ENCODE measurements at regions of chr12 and their contacts with region 1.

Region 1: DNA sequence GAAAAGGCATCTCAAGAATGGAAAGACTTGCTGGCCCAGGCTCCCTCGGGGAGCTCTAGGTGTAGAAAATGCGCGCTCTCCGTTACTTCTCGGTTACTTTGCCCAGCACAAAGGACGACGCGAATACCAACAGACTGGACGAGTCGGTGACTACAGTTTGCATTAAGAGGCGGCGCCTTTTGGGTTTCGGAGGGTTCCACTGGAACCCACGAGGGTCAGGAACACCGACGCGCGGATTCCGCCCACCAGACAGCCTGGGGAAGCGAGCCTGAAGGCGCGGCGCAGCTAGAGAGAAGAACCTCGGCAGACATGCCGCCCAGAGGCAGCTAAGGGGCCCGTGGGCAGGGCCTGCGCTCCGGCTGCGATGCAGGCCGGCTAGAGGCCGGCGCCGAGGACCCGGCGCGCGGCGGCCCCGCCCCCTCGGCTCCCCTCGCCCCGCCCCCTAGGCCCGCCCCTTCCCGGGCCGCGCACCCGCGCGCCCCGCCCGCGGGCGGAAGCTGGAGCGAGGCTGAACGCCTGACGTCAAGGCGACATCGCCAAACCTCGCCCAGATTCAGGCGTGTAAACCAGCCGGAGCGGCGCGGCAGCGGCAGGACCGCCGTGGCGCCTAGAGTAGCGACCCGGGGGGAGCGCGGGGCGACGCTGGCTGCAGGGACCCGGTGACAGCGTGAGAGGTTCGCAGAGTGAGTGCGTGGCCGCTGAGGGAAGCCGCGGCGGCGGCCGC is at the start of gene RAP1B:
- DNase-seq: peak; percentile 86 to 92 (median 89)
- ATAC-seq: peak; percentile 92
- H3K4me3 ChIP-seq: peak within 1 kb of the TSS; percentile 89
- H3K4me3 Mint-ChIP-seq: peak within 1 kb of the TSS; percentile 93 to 99 (median 98)
- H3K27ac ChIP-seq: peak within 1 kb of the TSS; percentile 97
- H3K27ac Mint-ChIP-seq: peak within 1 kb of the TSS; percentile 95 to 99 (median 98)
- H3K4me1 ChIP-seq: peaks cover 15 to 18% of the 10 kb centered on the region in 2 donors
- H3K4me1 Mint-ChIP-seq: peaks cover 36 to 46% (median 41%) of the 10 kb centered on the region in 7 donors
- H3K27me3 ChIP-seq: no peaks in the 10 kb centered on the region
- H3K27me3 Mint-ChIP-seq: no peaks in the 10 kb centered on the region
- total RNA-seq, gene RAP1B: 202 to 287 (median 223) TPM

Region 2: DNA sequence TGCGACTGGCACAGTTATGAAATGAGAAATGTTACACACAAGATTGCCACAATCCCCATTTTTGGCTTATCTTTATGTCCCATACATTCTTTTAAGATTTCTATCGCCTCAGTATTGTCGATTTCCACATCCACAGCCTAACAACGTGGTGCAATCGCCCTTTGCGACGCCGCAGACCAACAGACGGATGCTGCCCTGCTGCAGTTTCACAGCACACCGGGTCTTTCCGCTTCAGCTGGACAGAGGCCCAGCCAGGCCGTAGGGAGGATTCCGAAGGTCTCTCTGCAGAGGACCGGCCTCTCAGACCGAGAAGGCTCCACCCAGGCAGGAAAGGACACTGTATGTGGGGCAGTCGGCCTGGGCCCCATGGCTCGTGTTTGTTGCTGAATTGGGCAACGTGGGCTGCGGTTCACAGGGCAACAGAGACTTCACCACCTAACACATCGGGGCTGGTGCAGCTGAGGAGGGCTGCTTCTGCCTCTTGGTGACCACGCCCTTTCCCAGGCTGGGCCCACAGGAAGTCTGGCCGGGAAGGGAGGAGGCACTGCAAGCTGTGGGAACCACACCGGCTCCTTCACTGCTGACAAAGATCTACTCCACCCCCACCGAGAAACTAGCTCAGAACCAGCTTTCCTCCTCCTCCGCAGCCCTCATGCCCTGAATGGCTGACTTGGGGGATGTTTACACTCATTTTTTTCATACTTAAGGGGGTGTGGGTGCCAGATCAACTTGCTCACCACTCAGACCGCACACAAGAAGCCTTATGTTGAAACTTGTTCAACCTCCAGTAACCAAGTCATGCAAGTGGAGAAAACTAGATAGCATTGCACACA is 245.4 kb before region 1 on chr12:
- CTCF ChIA-PET with region 1: interaction called, 4 read pairs
- POLR2A ChIA-PET with region 1: interaction called, 12 read pairs
- intact Hi-C with region 1: loop called in 1 of 2 experiments (anchors 1 kb)
- DNase-seq: peak; percentile 52 to 85 (median 77)
- ATAC-seq: peak; percentile 86
- H3K4me3 ChIP-seq: peak overlapping the region; percentile 57
- H3K4me3 Mint-ChIP-seq: peak overlapping the region; percentile 77 to 93 (median 87)
- H3K27ac ChIP-seq: peak overlapping the region; percentile 80
- H3K27ac Mint-ChIP-seq: peak overlapping the region; percentile 86 to 97 (median 93)
- H3K4me1 ChIP-seq: peaks cover 40 to 50% of the 10 kb centered on the region in 2 donors
- H3K4me1 Mint-ChIP-seq: peaks cover 56 to 84% (median 69%) of the 10 kb centered on the region in 7 donors
- H3K27me3 ChIP-seq: no peaks in the 10 kb centered on the region
- H3K27me3 Mint-ChIP-seq: no peaks in the 10 kb centered on the region

Region 3: GRCh38 chr12:68497702-68498101 is 112.8 kb before region 1 on chr12:
- CTCF ChIA-PET with region 1: no interaction called
- POLR2A ChIA-PET with region 1: interaction called, 4 read pairs
- intact Hi-C with region 1: loop called in 1 of 2 experiments (anchors 1 kb)
- DNase-seq: no peak
- ATAC-seq: peak; percentile 26
- H3K4me3 ChIP-seq: no peak overlapping the region
- H3K4me3 Mint-ChIP-seq: peak overlapping the region in 1 of 10 donors; percentile 50
- H3K27ac ChIP-seq: no peak overlapping the region
- H3K27ac Mint-ChIP-seq: peak overlapping the region in 1 of 9 donors; percentile 73
- H3K4me1 ChIP-seq: peaks cover 0 to 7% of the 10 kb centered on the region in 2 donors
- H3K4me1 Mint-ChIP-seq: peaks cover 0 to 29% (median 18%) of the 10 kb centered on the region in 7 donors
- H3K27me3 ChIP-seq: no peaks in the 10 kb centered on the region
- H3K27me3 Mint-ChIP-seq: no peaks in the 10 kb centered on the region

Region 4: GRCh38 chr12:68587448-68587873 is 23.1 kb before region 1 on chr12:
- CTCF ChIA-PET with region 1: interaction called, 4 read pairs
- POLR2A ChIA-PET with region 1: interaction called, 167 read pairs
- intact Hi-C with region 1: loop called (anchors 1 kb)
- DNase-seq: peak in 8 of 9 donors; percentile 39 to 66 (median 53)
- ATAC-seq: peak; percentile 72
- H3K4me3 ChIP-seq: no peak overlapping the region
- H3K4me3 Mint-ChIP-seq: peak overlapping the region; percentile 10 to 70 (median 64)
- H3K27ac ChIP-seq: no peak overlapping the region
- H3K27ac Mint-ChIP-seq: peak overlapping the region; percentile 78 to 96 (median 88)
- H3K4me1 ChIP-seq: peaks cover 26 to 37% of the 10 kb centered on the region in 2 donors
- H3K4me1 Mint-ChIP-seq: peaks cover 33 to 82% (median 60%) of the 10 kb centered on the region in 7 donors
- H3K27me3 ChIP-seq: no peaks in the 10 kb centered on the region
- H3K27me3 Mint-ChIP-seq: no peaks in the 10 kb centered on the region

Region 5: GRCh38 chr12:68633614-68634529 is 23.3 kb after region 1 on chr12:
- CTCF ChIA-PET with region 1: no interaction called
- POLR2A ChIA-PET with region 1: interaction called, 10 read pairs
- intact Hi-C with region 1: loop called (anchors 2 kb)
- DNase-seq: no peak
- ATAC-seq: no peak
- H3K4me3 ChIP-seq: no peak overlapping the region
- H3K4me3 Mint-ChIP-seq: peak overlapping the region in 9 of 10 donors; percentile 26 to 80 (median 53)
- H3K27ac ChIP-seq: peak overlapping the region; percentile 43
- H3K27ac Mint-ChIP-seq: peak overlapping the region in 8 of 9 donors; percentile 10 to 94 (median 72)
- H3K4me1 ChIP-seq: peaks cover 67 to 77% of the 10 kb centered on the region in 2 donors
- H3K4me1 Mint-ChIP-seq: peaks cover 55 to 96% (median 87%) of the 10 kb centered on the region in 7 donors
- H3K27me3 ChIP-seq: no peaks in the 10 kb centered on the region
- H3K27me3 Mint-ChIP-seq: no peaks in the 10 kb centered on the region

Region 6: DNA sequence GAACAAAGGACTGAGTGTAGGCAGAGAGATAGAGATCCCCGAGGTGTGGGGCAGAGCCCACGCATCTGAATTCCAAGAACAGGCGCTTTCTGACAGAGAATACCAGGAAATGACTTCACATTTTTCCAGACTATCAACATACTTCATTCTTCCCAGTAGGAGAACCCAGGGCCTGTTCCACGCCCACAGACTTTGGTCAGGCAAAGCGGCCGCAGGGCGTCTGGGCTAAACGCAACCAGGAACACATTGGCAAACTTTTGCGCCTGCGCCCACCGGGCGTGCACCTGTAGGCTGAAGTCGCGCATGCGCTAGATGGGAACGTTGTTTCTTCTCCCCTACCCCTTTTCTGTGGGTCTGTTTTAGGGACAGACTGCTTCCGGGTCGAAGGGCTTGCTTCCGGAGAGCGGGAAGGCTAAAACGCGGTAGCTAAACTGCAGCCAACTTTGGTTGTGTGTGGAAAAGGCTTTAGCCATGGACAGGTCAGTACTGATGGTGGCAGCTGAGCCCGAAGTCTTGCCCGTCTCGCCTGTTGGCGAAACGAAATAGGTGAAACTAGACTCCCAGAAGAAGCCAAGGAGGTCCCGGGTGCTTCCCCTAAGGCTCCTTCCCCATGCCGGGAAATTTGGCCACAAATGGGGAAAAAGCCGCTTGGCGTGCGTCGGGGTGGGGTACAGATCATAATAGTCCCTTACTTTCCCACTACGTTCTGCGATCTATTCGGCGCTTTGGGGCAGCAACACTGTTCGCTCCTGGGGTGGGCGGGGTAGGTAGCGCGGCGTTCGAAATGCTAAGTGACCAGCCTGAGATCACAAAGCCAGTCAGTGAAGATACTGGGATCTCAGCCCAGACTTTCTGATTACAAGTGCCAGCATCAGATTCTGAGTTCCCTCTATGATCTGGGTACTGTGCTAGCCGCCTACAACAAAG is 76.3 kb after region 1 on chr12 and contains the start of gene NUP107:
- CTCF ChIA-PET with region 1: interaction called, 4 read pairs
- POLR2A ChIA-PET with region 1: interaction called, 14 read pairs
- intact Hi-C with region 1: loop called (anchors 1 kb)
- DNase-seq: peak; percentile 92 to 97 (median 95)
- ATAC-seq: peak; percentile 99
- H3K4me3 ChIP-seq: peak within 1 kb of the TSS; percentile 90
- H3K4me3 Mint-ChIP-seq: peak within 1 kb of the TSS; percentile 94 to 100 (median 98)
- H3K27ac ChIP-seq: peak within 1 kb of the TSS; percentile 85
- H3K27ac Mint-ChIP-seq: peak within 1 kb of the TSS; percentile 96 to 100 (median 99)
- H3K4me1 ChIP-seq: peaks cover 13 to 16% of the 10 kb centered on the region in 2 donors
- H3K4me1 Mint-ChIP-seq: peaks cover 10 to 51% (median 42%) of the 10 kb centered on the region in 7 donors
- H3K27me3 ChIP-seq: no peaks in the 10 kb centered on the region
- H3K27me3 Mint-ChIP-seq: peaks cover 0 to 2% (median 0%) of the 10 kb centered on the region in 5 donors
- total RNA-seq, gene NUP107: 45.2 to 80.9 (median 69.0) TPM

Measured in naive thymus-derived CD4-positive, alpha-beta T cell (primary cell).